ENCODE measurements at regions of chr2 and their contacts with region 1.

Region 1: DNA sequence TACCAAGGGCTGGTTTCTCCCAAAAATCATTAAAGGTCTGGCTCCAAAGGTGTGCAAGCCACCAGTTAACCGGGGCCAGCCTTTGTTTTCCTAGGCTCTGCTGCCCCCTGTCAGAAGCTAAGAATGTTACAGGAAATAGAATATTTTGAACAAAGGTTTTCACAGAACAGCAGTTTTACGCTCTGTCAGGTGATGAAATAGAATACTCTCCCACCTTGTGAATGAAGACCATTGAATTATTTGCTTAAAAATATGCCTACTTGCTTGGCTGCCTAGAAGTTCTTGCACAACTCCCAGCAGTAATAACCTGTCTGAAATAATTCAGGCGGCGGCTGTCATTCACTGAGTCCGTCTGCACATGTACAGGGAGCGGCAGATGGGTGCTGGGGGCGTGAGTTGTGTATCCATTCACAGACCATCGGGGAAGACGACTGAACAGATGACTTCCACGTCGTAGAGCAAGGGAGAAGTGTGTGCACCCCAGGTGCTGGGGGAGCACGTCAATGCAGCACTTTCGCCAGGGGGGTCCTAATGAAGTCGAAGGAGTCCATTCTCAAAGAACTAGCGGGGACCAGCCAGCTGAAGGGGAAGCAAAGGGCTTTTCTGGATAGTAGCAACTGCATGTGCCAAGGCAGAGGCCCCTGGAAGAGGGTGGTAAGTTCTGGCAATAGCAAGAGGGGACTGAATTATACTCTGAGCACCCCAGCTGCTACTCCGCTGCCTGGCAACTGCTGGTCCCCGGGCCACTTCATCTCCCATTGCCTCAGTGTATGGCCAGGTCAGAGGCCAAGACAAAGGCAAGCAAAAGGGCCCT is 56.1 kb downstream of the SF3B1 start:
- DNase-seq: peak; percentile 26 to 72 (median 61)
- ATAC-seq: peak; percentile 83
- H3K4me3 ChIP-seq: no peak overlapping the region
- H3K4me3 Mint-ChIP-seq: peak overlapping the region in 2 of 10 donors; percentile 21 to 47
- H3K27ac ChIP-seq: no peak overlapping the region
- H3K27ac Mint-ChIP-seq: peak overlapping the region in 2 of 9 donors; percentile 45 to 75
- H3K4me1 ChIP-seq: peaks cover 0 to 6% of the 10 kb centered on the region in 2 donors
- H3K4me1 Mint-ChIP-seq: peaks cover 9 to 27% (median 16%) of the 10 kb centered on the region in 7 donors
- H3K27me3 ChIP-seq: no peaks in the 10 kb centered on the region
- H3K27me3 Mint-ChIP-seq: peaks cover 0 to 12% (median 0%) of the 10 kb centered on the region in 5 donors

Region 2: DNA sequence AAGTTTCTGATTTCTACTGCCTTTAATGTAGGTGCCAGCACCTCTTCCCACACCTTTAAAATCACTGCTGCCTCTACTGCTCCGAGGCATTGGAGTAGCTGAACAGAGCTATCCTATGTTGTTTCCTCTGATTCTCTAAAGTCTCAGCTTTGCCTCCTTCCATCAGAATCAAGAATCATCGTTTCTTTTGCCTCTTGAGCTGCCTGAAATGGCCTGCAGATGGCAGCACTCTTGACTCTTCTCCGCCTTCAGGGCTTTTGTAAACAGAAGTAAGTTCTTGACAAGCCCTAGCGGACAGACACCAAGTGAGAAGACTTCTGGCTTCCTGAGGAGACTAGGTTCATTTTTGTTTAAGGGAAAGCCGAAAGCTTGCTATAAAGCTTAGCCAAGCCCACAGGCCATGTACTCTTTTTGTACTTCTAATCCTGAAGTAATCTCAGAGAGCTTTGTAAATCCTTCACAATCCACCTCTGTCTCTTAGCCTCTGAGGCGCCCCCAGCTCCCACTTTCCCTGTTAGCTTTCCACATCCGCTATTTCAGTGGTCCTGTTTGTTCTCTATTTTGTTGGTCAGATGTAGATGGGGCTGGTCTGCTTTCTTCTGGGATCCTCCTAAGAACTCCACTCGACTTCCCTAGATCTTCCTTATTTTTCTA is 627.6 kb before region 1 on chr2:
- CTCF ChIA-PET with region 1: no interaction called
- POLR2A ChIA-PET with region 1: no interaction called
- intact Hi-C with region 1: loop called in 1 of 2 experiments (anchors 1 kb)
- DNase-seq: peak; percentile 17 to 62 (median 51)
- ATAC-seq: peak; percentile 95
- H3K4me3 ChIP-seq: no peak overlapping the region
- H3K4me3 Mint-ChIP-seq: peak overlapping the region in 2 of 10 donors; percentile 7 to 33
- H3K27ac ChIP-seq: no peak overlapping the region
- H3K27ac Mint-ChIP-seq: peak overlapping the region in 4 of 9 donors; percentile 21 to 33 (median 28)
- H3K4me1 ChIP-seq: no peaks in the 10 kb centered on the region
- H3K4me1 Mint-ChIP-seq: peaks cover 9 to 24% (median 16%) of the 10 kb centered on the region in 7 donors
- H3K27me3 ChIP-seq: no peaks in the 10 kb centered on the region
- H3K27me3 Mint-ChIP-seq: no peaks in the 10 kb centered on the region

Region 3: DNA sequence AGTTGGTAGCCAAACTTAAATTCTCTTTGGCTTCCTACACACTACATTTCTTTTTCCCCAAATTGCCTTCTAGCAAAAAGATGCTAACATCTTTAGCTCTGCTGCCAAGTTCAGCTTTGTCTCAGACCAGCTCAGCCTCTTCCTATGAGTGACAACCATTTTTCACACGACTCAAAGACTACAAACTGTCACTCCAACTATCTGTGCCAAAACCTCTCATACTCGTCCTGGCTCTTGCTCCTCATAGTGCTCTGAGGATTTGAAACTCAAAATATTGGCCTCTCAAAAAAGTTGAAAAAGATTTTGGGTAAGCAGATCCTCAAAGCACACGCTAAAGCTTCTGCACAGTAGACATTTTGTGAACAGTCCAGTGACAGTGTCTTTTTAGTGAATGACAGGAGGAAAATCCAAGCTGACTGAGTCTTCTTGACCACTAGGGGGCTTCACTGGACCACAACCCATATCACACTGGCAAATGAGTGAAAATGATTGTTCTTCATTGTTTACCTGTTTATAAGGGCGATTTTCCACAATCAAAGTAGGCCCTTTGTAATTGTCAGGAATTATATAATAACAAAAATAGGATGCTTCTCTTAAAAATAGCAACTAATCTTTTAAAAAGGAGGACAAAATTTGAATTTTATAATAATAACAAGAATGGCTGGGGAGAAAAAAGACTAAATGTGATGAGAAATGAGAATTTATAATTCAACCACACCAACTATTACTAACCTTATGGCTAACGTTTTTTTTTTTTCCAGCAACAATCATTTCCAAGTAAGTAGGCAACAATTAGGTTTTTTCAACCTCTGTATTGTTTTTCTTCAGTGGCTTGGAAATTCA is 366.7 kb before region 1 on chr2:
- CTCF ChIA-PET with region 1: interaction called, 6 read pairs
- POLR2A ChIA-PET with region 1: no interaction called
- intact Hi-C with region 1: loop called (anchors 1 kb)
- DNase-seq: peak in 6 of 9 donors; percentile 11 to 51 (median 40)
- ATAC-seq: peak; percentile 76
- H3K4me3 ChIP-seq: no peak overlapping the region
- H3K4me3 Mint-ChIP-seq: no peak overlapping the region
- H3K27ac ChIP-seq: no peak overlapping the region
- H3K27ac Mint-ChIP-seq: peak overlapping the region; percentile 5 to 90 (median 73)
- H3K4me1 ChIP-seq: peaks cover 0 to 3% of the 10 kb centered on the region in 2 donors
- H3K4me1 Mint-ChIP-seq: peaks cover 0 to 18% (median 9%) of the 10 kb centered on the region in 7 donors
- H3K27me3 ChIP-seq: no peaks in the 10 kb centered on the region
- H3K27me3 Mint-ChIP-seq: no peaks in the 10 kb centered on the region

Region 4: GRCh38 chr2:197255543-197255942 is 123.2 kb before region 1 on chr2:
- CTCF ChIA-PET with region 1: no interaction called
- POLR2A ChIA-PET with region 1: no interaction called
- intact Hi-C with region 1: loop called in 1 of 2 experiments (anchors 5 kb)
- DNase-seq: peak in 7 of 9 donors; percentile 47 to 83 (median 56)
- ATAC-seq: peak; percentile 96
- H3K4me3 ChIP-seq: peak overlapping the region; percentile 38
- H3K4me3 Mint-ChIP-seq: peak overlapping the region; percentile 69 to 88 (median 77)
- H3K27ac ChIP-seq: peak overlapping the region; percentile 80
- H3K27ac Mint-ChIP-seq: peak overlapping the region; percentile 84 to 98 (median 94)
- H3K4me1 ChIP-seq: peaks cover 68 to 74% of the 10 kb centered on the region in 2 donors
- H3K4me1 Mint-ChIP-seq: peaks cover 58 to 98% (median 82%) of the 10 kb centered on the region in 7 donors
- H3K27me3 ChIP-seq: no peaks in the 10 kb centered on the region
- H3K27me3 Mint-ChIP-seq: no peaks in the 10 kb centered on the region

Region 5: GRCh38 chr2:197777823-197778407 is 399.2 kb after region 1 on chr2:
- CTCF ChIA-PET with region 1: no interaction called
- POLR2A ChIA-PET with region 1: no interaction called
- intact Hi-C with region 1: loop called in 1 of 2 experiments (anchors 5 kb)
- DNase-seq: peak in 5 of 9 donors; percentile 30 to 50 (median 37)
- ATAC-seq: no peak
- H3K4me3 ChIP-seq: no peak overlapping the region
- H3K4me3 Mint-ChIP-seq: no peak overlapping the region
- H3K27ac ChIP-seq: no peak overlapping the region
- H3K27ac Mint-ChIP-seq: no peak overlapping the region
- H3K4me1 ChIP-seq: no peaks in the 10 kb centered on the region
- H3K4me1 Mint-ChIP-seq: peaks cover 0 to 6% (median 0%) of the 10 kb centered on the region in 7 donors
- H3K27me3 ChIP-seq: no peaks in the 10 kb centered on the region
- H3K27me3 Mint-ChIP-seq: peaks cover 4 to 26% (median 9%) of the 10 kb centered on the region in 5 donors

Measured in naive thymus-derived CD4-positive, alpha-beta T cell (primary cell).